AG04449 (cell line): ENCODE measurements at regions of chr11 and their contacts with region 1.

Region 1: GRCh38 chr11:76680518-76681425 is 10.2 kb upstream of the LRRC32 start:
- DNase-seq: no peak
- H3K4me3 ChIP-seq: no peak overlapping the region
- CTCF ChIP-seq: peak; percentile 82

Region 2: DNA sequence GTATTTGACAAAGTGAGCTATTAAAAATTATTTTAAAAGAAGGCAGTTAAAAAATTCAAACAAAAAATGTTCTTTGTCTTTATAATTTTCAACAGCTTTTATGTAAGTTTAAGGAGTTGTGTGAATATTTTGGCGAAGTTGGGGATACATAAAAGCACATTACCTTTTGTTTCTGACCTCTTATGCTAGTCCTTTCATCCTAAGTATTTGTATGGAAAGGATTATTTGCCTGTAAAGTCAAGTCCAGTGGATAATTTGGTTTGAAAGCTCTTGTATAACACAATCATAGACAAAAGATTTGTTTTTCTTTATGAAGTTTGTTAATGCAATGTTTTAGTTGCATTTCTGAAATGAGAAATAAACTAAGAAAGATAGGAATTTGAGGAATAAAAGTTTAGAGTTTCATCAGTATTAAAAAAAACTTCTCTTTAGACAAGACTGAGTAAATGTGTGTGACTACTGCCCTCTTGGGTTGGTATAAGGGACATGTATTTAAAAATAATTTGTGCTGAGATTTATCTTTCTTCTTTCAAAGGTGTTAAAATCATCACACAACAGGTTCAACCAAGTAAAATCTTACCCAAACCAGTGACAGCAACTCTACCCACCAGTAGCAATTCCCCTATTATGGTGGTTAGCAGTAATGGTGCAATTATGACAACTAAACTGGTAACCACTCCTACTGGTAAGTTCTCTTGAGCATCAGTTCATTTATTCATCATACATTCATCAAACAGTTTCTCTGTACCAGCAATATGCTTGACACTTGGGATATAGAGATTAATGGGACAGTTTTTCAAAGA is 167.7 kb before region 1 on chr11:
- CTCF ChIA-PET with region 1: interaction called, 10 read pairs
- POLR2A ChIA-PET with region 1: no interaction called
- DNase-seq: no peak
- H3K4me3 ChIP-seq: no peak overlapping the region
- CTCF ChIP-seq: peak; percentile 22

Region 3: GRCh38 chr11:76551400-76551799 is 129.4 kb before region 1 on chr11:
- CTCF ChIA-PET with region 1: interaction called, 27 read pairs
- POLR2A ChIA-PET with region 1: no interaction called
- DNase-seq: no peak
- H3K4me3 ChIP-seq: no peak overlapping the region
- CTCF ChIP-seq: peak; percentile 21

Region 4: DNA sequence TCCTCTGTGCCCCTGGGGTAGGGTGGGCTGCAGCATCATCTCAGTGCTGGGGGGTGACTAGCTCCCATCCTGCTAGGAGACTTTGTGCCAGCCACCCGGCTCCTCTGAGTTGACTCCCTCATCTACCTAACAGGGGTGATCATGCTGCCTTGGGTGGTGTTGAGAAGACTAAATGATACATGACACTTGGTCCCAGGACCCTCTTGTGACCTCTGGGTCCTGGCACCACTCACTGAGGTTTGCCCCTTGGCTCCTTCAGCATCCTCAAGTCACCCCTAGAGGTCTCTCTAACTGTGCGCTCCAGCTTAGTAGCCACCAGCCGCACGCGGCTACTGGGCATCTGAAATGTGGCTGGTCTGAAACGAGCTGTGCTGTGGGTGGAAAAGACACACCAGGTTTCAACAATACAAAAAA is 82.3 kb before region 1 on chr11:
- CTCF ChIA-PET with region 1: interaction called, 36 read pairs
- POLR2A ChIA-PET with region 1: no interaction called
- DNase-seq: no peak
- H3K4me3 ChIP-seq: no peak overlapping the region
- CTCF ChIP-seq: peak; percentile 62

Region 5: GRCh38 chr11:76626921-76627401 is 53.8 kb before region 1 on chr11:
- CTCF ChIA-PET with region 1: no interaction called
- POLR2A ChIA-PET with region 1: no interaction called
- DNase-seq: no peak
- H3K4me3 ChIP-seq: no peak overlapping the region
- CTCF ChIP-seq: no peak

Region 6: GRCh38 chr11:76670485-76671236 is 10.1 kb before region 1 on chr11 and contains the start of gene LRRC32:
- CTCF ChIA-PET with region 1: interaction called, 28 read pairs
- POLR2A ChIA-PET with region 1: no interaction called
- DNase-seq: no peak
- H3K4me3 ChIP-seq: peak within 1 kb of the TSS; percentile 59
- CTCF ChIP-seq: no peak

Region 7: GRCh38 chr11:76694664-76695063 is 13.9 kb after region 1 on chr11:
- CTCF ChIA-PET with region 1: interaction called, 17 read pairs
- POLR2A ChIA-PET with region 1: no interaction called
- DNase-seq: peak; percentile 38
- H3K4me3 ChIP-seq: no peak overlapping the region
- CTCF ChIP-seq: no peak